ENCODE measurements at regions of chr2 and their contacts with region 1.

Region 1: GRCh38 chr2:206783718-206784117 is 18.3 kb downstream of the FASTKD2 start:
- DNase-seq: no peak
- H3K4me3 Mint-ChIP-seq: no peak overlapping the region
- H3K27ac Mint-ChIP-seq: no peak overlapping the region
- H3K4me1 Mint-ChIP-seq: peaks cover 2% of the 10 kb centered on the region
- H3K27me3 Mint-ChIP-seq: no peaks in the 10 kb centered on the region

Region 2: DNA sequence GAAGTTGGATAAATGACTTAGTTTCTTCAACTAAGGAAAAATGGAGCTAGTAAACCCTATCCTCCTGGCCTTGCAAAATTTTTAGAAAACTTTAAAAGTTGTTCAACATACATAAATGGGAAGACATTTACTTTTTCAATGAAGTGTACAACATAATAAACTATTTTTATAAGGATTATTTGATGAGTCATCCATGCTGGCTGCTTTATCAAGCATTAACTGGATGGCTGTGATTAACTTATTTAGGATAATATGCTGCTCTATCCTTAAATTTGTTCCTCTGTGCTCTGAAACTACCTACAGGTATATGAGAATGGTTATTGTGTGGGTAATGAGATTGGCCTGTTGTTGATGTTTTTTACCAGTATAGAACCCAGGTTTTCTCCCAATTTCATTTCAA is 86.8 kb before region 1 on chr2:
- CTCF ChIA-PET with region 1: interaction called, 27 read pairs
- POLR2A ChIA-PET with region 1: no interaction called
- DNase-seq: no peak
- H3K4me3 Mint-ChIP-seq: no peak overlapping the region
- H3K27ac Mint-ChIP-seq: no peak overlapping the region
- H3K4me1 Mint-ChIP-seq: no peaks in the 10 kb centered on the region
- H3K27me3 Mint-ChIP-seq: peaks cover 16% of the 10 kb centered on the region

Region 3: GRCh38 chr2:206765242-206766056 is 18.3 kb before region 1 on chr2 and contains the starts of genes FASTKD2 and MDH1B:
- CTCF ChIA-PET with region 1: interaction called, 23 read pairs
- POLR2A ChIA-PET with region 1: interaction called, 8 read pairs
- DNase-seq: peak; percentile 88
- H3K4me3 Mint-ChIP-seq: peak within 1 kb of the TSS; percentile 88
- H3K27ac Mint-ChIP-seq: peak within 1 kb of the TSS; percentile 89
- H3K4me1 Mint-ChIP-seq: peaks cover 34% of the 10 kb centered on the region
- H3K27me3 Mint-ChIP-seq: peaks cover 3% of the 10 kb centered on the region
- total RNA-seq, gene FASTKD2: 15.4 to 15.7 TPM
- total RNA-seq, gene MDH1B: 0.08 to 0.15 TPM

Region 4: DNA sequence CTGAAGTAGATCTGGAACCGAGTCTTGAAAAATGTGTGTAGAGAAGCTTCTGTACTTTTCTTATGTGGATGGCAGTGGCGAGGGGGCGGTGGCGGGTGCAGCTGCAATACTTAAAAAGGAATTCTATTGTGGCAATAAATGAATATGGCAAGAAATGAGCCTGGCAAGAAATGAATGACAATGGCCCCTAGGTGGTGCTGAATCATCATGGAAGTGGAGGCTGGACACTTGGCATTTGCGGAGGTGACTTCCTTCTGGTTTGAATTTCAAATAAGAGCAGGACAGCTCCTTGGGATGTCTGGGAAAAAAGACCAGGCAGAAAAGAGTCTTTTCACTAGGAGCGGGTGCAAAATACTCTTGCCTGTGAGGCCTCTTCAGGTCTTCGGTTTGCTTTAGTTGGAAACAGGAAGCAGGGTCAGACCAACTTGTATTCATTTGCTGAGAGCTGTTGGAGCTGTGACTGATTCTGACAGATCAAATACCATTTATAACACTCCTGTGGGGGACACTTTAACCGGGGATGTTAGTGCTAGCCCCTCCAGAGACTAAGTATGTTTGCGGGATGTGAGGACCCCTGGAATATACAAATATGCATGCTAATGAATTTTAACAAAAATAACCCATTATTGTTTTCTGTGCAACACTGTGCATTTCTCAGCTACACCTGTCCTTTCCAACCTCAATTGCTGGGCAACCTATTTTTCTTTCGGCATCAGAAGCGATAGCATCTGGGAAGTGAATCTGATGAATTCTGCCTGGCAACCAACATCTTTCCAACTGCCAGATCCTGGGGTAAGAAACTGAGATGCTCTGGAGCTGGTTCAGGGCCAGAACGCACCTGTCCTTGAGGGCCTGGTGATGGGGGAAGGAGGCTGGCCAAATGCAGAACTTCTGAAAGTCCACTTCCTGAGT is 17.0 kb after region 1 on chr2:
- CTCF ChIA-PET with region 1: interaction called, 23 read pairs
- POLR2A ChIA-PET with region 1: no interaction called
- DNase-seq: peak; percentile 60
- H3K4me3 Mint-ChIP-seq: peak overlapping the region; percentile 51
- H3K27ac Mint-ChIP-seq: peak overlapping the region; percentile 46
- H3K4me1 Mint-ChIP-seq: peaks cover 18% of the 10 kb centered on the region
- H3K27me3 Mint-ChIP-seq: no peaks in the 10 kb centered on the region

Region 5: GRCh38 chr2:207792244-207792785 is 1008.6 kb after region 1 on chr2:
- CTCF ChIA-PET with region 1: no interaction called
- POLR2A ChIA-PET with region 1: no interaction called
- DNase-seq: no peak
- H3K4me3 Mint-ChIP-seq: no peak overlapping the region
- H3K27ac Mint-ChIP-seq: no peak overlapping the region
- H3K4me1 Mint-ChIP-seq: no peaks in the 10 kb centered on the region
- H3K27me3 Mint-ChIP-seq: peaks cover 12% of the 10 kb centered on the region